Activated CD4-positive, alpha-beta T cell treated with anti-CD3 and anti-CD28 coated beads for 36 hours (primary cell): ENCODE measurements at regions of chr18 and their contacts with region 1.

Region 1: GRCh38 chr18:29749704-29750103 is 1292.8 kb downstream of the DSC3 start:
- DNase-seq: no peak
- ATAC-seq: no peak
- H3K4me3 Mint-ChIP-seq: no peak overlapping the region
- H3K27ac Mint-ChIP-seq: no peak overlapping the region
- H3K4me1 Mint-ChIP-seq: no peaks in the 10 kb centered on the region
- H3K27me3 Mint-ChIP-seq: no peaks in the 10 kb centered on the region

Region 2: GRCh38 chr18:29693334-29693733 is 56.4 kb before region 1 on chr18:
- CTCF ChIA-PET with region 1: no interaction called
- POLR2A ChIA-PET with region 1: no interaction called
- intact Hi-C with region 1: loop called in 1 of 2 experiments (anchors 5 kb)
- DNase-seq: no peak
- ATAC-seq: no peak
- H3K4me3 Mint-ChIP-seq: no peak overlapping the region
- H3K27ac Mint-ChIP-seq: no peak overlapping the region
- H3K4me1 Mint-ChIP-seq: no peaks in the 10 kb centered on the region
- H3K27me3 Mint-ChIP-seq: no peaks in the 10 kb centered on the region